Naive thymus-derived CD4-positive, alpha-beta T cell (primary cell): ENCODE measurements at regions of chr6 and their contacts with region 1.

Region 1: DNA sequence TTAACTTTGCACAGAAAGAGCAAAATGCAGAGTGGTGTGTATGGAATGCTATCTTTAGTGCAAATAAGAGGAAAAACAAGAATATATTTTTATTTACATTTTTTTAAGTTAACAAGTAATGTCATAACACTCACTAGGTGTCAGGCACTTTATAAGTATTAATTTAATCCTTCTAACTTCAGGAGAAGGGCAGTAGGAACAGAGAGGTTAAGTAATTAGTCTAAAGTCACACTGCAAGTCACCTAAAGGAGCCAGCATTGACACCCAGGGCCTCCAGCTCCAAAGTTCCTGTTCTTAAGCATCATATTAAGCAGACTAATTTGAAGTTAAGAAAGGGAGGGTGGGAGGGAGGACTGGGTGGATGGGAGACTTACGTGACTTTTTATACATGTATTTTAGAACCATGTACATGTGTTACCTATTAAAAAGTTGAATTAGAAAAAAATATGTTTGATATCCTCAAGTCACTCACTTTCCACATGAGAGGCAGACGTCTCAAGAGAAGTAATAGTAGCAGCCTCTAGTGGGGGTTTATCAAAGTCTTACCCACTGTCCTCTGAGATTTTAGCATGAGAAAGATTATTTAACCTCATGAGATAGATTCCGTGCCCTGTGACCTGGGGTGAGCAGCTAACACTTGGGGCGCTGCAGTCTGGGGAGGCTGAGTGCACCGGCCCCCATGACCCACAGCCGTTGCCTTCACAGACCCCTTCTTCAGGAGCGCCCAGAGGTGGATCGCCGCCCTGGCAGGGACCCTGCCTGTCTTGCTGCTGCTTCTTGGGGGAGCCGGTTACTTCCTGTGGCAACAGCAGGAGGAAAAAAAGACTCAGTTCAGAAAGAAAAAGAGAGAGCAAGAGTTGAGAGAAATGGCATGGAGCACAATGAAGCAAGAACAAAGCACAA is 7.0 kb downstream of the BTN3A1 start:
- DNase-seq: no peak
- ATAC-seq: no peak
- H3K4me3 ChIP-seq: no peak overlapping the region
- H3K4me3 Mint-ChIP-seq: no peak overlapping the region
- H3K27ac ChIP-seq: peak overlapping the region; percentile 14
- H3K27ac Mint-ChIP-seq: peak overlapping the region in 5 of 9 donors; percentile 41 to 99 (median 71)
- H3K4me1 ChIP-seq: peaks cover 36 to 38% of the 10 kb centered on the region in 2 donors
- H3K4me1 Mint-ChIP-seq: peaks cover 37 to 62% (median 49%) of the 10 kb centered on the region in 7 donors
- H3K27me3 ChIP-seq: no peaks in the 10 kb centered on the region
- H3K27me3 Mint-ChIP-seq: no peaks in the 10 kb centered on the region

Region 2: GRCh38 chr6:26427093-26427809 is 18.2 kb after region 1 on chr6:
- CTCF ChIA-PET with region 1: interaction called, 3 read pairs
- POLR2A ChIA-PET with region 1: interaction called, 3 read pairs
- intact Hi-C with region 1: loop called in 1 of 2 experiments (anchors 2 kb)
- DNase-seq: no peak
- ATAC-seq: no peak
- H3K4me3 ChIP-seq: no peak overlapping the region
- H3K4me3 Mint-ChIP-seq: no peak overlapping the region
- H3K27ac ChIP-seq: no peak overlapping the region
- H3K27ac Mint-ChIP-seq: no peak overlapping the region
- H3K4me1 ChIP-seq: no peaks in the 10 kb centered on the region
- H3K4me1 Mint-ChIP-seq: peaks cover 0 to 16% (median 0%) of the 10 kb centered on the region in 7 donors
- H3K27me3 ChIP-seq: no peaks in the 10 kb centered on the region
- H3K27me3 Mint-ChIP-seq: no peaks in the 10 kb centered on the region